Activated CD4-positive, alpha-beta memory T cell treated with anti-CD3 and anti-CD28 coated beads, Interleukin-2, amount 10 ng/mL, durations not matched to agents 7 days and 5 days (primary cell): ENCODE measurements at regions of chr6 and their contacts with region 1.

Region 1: DNA sequence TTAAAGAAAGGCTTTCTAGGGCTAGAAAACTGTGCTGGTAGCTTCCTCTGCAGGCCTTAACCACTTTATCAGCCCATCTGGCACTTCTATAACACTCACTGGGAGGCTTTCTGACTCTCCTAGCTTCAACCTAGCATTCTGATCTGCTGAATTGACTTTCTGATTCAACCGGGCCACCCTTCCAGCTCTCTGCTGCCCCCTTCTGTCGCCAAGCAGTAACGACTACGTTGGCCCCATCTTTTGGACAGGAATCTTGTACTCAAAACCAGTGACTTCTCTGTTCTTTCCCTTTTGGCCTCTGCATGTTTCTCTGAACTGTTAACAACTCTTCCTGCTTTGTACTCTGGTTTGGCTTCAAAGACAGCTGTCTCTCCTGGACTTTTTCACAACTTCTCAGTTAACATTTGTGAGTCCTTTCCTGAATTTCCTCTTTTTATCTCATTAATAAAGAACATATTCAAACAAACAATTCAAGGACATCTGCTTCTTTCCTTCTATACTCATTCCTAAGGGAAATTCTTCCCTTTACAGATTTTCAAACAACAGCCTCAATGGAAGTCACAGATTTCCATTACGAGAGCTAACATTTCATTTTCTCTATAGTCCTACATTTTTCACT is 43.9 kb upstream of the FAM135A start:
- DNase-seq: peak; percentile 68
- H3K4me3 Mint-ChIP-seq: no peak overlapping the region
- H3K27ac Mint-ChIP-seq: no peak overlapping the region
- H3K4me1 Mint-ChIP-seq: no peaks in the 10 kb centered on the region
- H3K27me3 Mint-ChIP-seq: peaks cover 40% of the 10 kb centered on the region

Region 2: GRCh38 chr6:70221025-70221714 is 148.3 kb before region 1 on chr6:
- CTCF ChIA-PET with region 1: interaction called, 47 read pairs
- POLR2A ChIA-PET with region 1: interaction called, 3 read pairs
- DNase-seq: no peak
- H3K4me3 Mint-ChIP-seq: no peak overlapping the region
- H3K27ac Mint-ChIP-seq: no peak overlapping the region
- H3K4me1 Mint-ChIP-seq: no peaks in the 10 kb centered on the region
- H3K27me3 Mint-ChIP-seq: peaks cover 5% of the 10 kb centered on the region

Region 3: GRCh38 chr6:70310063-70310694 is 59.3 kb before region 1 on chr6:
- CTCF ChIA-PET with region 1: interaction called, 50 read pairs
- POLR2A ChIA-PET with region 1: no interaction called
- DNase-seq: no peak
- H3K4me3 Mint-ChIP-seq: no peak overlapping the region
- H3K27ac Mint-ChIP-seq: no peak overlapping the region
- H3K4me1 Mint-ChIP-seq: peaks cover 1% of the 10 kb centered on the region
- H3K27me3 Mint-ChIP-seq: peaks cover 27% of the 10 kb centered on the region

Region 4: DNA sequence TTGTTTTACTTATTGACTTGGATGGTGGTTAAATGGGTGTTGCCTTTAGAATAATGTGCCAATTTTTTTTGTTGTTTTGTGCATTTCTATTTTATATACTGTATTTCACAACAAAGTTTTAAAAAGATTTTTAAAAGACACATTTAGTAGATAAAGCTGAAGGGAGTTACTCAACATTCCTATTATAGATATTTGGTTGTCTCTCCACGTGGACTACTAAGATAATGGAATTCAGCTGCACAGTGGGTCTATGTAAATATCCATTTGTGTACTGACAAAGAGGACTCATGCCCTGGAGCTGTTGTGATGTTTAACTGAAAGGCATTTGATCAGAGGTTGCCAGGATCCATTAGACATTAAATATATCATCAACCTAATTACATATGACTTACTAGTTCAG is 20.6 kb after region 1 on chr6:
- CTCF ChIA-PET with region 1: interaction called, 14 read pairs
- POLR2A ChIA-PET with region 1: no interaction called
- DNase-seq: no peak
- H3K4me3 Mint-ChIP-seq: no peak overlapping the region
- H3K27ac Mint-ChIP-seq: no peak overlapping the region
- H3K4me1 Mint-ChIP-seq: no peaks in the 10 kb centered on the region
- H3K27me3 Mint-ChIP-seq: peaks cover 19% of the 10 kb centered on the region

Region 5: GRCh38 chr6:70413114-70413991 is 43.9 kb after region 1 on chr6 and contains the start of gene FAM135A:
- CTCF ChIA-PET with region 1: interaction called, 25 read pairs
- POLR2A ChIA-PET with region 1: no interaction called
- DNase-seq: peak; percentile 96
- H3K4me3 Mint-ChIP-seq: peak within 1 kb of the TSS; percentile 87
- H3K27ac Mint-ChIP-seq: peak within 1 kb of the TSS; percentile 77
- H3K4me1 Mint-ChIP-seq: peaks cover 25% of the 10 kb centered on the region
- H3K27me3 Mint-ChIP-seq: peaks cover 6% of the 10 kb centered on the region
- total RNA-seq, gene FAM135A: 9.2 to 10.0 TPM

Region 6: GRCh38 chr6:70686548-70687133 is 317.2 kb after region 1 on chr6:
- CTCF ChIA-PET with region 1: interaction called, 19 read pairs
- POLR2A ChIA-PET with region 1: no interaction called
- DNase-seq: no peak
- H3K4me3 Mint-ChIP-seq: no peak overlapping the region
- H3K27ac Mint-ChIP-seq: no peak overlapping the region
- H3K4me1 Mint-ChIP-seq: peaks cover 31% of the 10 kb centered on the region
- H3K27me3 Mint-ChIP-seq: no peaks in the 10 kb centered on the region

Region 7: GRCh38 chr6:70955441-70956190 is 586.2 kb after region 1 on chr6:
- CTCF ChIA-PET with region 1: interaction called, 10 read pairs
- POLR2A ChIA-PET with region 1: no interaction called
- DNase-seq: peak; percentile 86
- H3K4me3 Mint-ChIP-seq: peak overlapping the region; percentile 49
- H3K27ac Mint-ChIP-seq: no peak overlapping the region
- H3K4me1 Mint-ChIP-seq: peaks cover 20% of the 10 kb centered on the region
- H3K27me3 Mint-ChIP-seq: peaks cover 51% of the 10 kb centered on the region